ENCODE measurements at regions of chr15 and their contacts with region 1.

Region 1: GRCh38 chr15:89893696-89894455 is at the start of gene AP3S2:
- DNase-seq: peak; percentile 95
- H3K4me3 Mint-ChIP-seq: peak within 1 kb of the TSS; percentile 95
- H3K27ac Mint-ChIP-seq: peak within 1 kb of the TSS; percentile 98
- H3K4me1 Mint-ChIP-seq: peaks cover 56% of the 10 kb centered on the region
- H3K27me3 Mint-ChIP-seq: no peaks in the 10 kb centered on the region
- total RNA-seq, gene AP3S2: 17.2 to 23.5 TPM

Region 2: DNA sequence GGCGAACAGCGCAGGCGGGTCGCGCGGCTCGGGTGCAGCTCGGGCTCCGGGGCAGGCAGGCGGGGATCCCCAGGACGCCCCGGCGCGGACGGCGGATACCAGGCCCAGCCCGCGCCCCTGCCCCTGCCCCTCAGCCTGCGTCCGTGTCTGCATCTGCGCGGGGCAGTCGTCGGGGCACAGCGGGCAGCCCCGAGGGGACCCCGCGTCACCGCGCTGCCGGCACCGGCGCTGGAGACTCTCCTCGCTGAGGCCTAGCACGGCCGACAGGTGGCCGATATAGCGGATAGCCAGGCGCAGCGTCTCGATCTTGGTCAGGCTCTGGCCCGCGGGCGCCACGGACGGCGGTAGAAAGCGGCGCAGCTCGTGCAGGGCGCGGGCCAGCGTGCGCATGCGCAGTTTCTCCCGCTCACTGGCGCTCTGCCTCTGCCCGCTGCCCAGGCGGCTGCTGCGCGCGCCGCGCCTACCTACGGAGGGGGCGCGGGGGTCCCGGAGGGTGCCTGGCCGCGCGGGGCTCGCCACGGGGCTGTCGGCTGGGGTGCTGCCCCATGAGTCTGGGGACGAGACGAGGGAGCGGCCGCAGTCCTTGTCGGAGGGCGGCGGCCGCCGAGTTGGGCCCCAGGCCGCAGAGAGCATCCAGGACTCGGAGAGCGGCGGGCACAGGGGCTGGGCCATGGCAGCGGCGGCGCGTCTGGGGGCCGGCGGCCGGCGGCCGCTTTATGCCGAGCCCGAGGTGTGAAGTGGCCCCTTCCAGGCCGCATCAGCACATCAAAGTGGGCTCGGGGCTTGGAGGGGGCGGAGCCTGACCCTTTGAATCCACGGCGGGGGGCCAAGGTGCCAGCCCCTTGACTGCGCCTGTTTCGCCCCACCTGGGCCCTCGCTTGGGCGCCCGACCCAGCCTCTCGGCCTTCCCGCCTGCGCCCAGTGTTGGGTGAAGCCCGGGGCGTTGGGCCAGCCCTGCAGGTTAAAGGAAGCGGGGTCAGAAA is 143.0 kb before region 1 on chr15 and contains the start of gene MESP1:
- CTCF ChIA-PET with region 1: no interaction called
- POLR2A ChIA-PET with region 1: no interaction called
- intact Hi-C with region 1: loop called (anchors 5 kb)
- DNase-seq: peak; percentile 91
- H3K4me3 Mint-ChIP-seq: peak within 1 kb of the TSS; percentile 66
- H3K27ac Mint-ChIP-seq: no peak within 1 kb of the TSS
- H3K4me1 Mint-ChIP-seq: peaks cover 3% of the 10 kb centered on the region
- H3K27me3 Mint-ChIP-seq: peaks cover 6% of the 10 kb centered on the region
- total RNA-seq, gene MESP1: 4.6 to 6.7 TPM

Region 3: GRCh38 chr15:89910891-89911626 is 17.2 kb after region 1 on chr15:
- CTCF ChIA-PET with region 1: no interaction called
- POLR2A ChIA-PET with region 1: no interaction called
- intact Hi-C with region 1: no loop called
- DNase-seq: no peak
- H3K4me3 Mint-ChIP-seq: no peak overlapping the region
- H3K27ac Mint-ChIP-seq: no peak overlapping the region
- H3K4me1 Mint-ChIP-seq: peaks cover 3% of the 10 kb centered on the region
- H3K27me3 Mint-ChIP-seq: peaks cover 27% of the 10 kb centered on the region

Region 4: DNA sequence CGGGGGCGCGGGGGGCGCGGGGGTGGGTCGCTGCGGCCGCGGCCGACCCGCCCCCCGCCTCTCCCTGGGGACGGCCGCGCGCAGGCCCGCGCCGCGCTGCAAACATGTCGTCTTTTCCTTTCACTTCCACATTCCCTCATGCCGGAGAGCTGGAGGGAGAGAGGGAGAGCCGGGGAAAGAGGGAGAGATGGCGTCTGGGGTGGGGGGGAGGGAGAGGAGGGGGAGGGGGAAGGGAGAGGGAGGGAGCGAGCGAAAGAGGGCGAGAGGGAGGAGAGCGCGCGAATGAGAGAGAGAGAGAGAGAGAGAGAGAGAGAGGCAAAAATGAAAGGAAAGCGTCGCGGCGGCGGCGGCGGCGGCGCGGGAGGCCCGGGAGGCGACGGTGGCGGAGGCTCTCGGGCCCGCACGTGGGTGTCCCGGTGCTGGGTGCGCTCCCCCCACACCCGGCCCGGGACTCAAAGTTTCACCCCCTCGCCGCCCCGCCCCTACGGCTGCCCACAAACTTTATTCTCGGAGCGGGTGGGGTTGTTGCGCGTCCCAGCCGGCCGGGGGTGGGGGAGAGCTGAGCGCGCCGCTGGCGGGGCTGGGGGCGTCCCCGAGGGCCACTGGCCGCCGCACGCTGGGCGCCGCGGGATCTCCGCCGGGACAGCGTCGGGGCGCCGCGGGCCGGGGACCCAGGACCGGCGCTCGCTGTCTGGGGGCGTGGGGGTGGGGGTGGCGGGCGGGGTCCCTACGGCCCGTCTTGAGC is 108.0 kb after region 1 on chr15:
- CTCF ChIA-PET with region 1: interaction called, 3 read pairs
- POLR2A ChIA-PET with region 1: interaction called, 3 read pairs
- intact Hi-C with region 1: loop called (anchors 2 kb)
- DNase-seq: peak; percentile 78
- H3K4me3 Mint-ChIP-seq: peak overlapping the region; percentile 86
- H3K27ac Mint-ChIP-seq: peak overlapping the region; percentile 86
- H3K4me1 Mint-ChIP-seq: peaks cover 52% of the 10 kb centered on the region
- H3K27me3 Mint-ChIP-seq: no peaks in the 10 kb centered on the region

Region 5: DNA sequence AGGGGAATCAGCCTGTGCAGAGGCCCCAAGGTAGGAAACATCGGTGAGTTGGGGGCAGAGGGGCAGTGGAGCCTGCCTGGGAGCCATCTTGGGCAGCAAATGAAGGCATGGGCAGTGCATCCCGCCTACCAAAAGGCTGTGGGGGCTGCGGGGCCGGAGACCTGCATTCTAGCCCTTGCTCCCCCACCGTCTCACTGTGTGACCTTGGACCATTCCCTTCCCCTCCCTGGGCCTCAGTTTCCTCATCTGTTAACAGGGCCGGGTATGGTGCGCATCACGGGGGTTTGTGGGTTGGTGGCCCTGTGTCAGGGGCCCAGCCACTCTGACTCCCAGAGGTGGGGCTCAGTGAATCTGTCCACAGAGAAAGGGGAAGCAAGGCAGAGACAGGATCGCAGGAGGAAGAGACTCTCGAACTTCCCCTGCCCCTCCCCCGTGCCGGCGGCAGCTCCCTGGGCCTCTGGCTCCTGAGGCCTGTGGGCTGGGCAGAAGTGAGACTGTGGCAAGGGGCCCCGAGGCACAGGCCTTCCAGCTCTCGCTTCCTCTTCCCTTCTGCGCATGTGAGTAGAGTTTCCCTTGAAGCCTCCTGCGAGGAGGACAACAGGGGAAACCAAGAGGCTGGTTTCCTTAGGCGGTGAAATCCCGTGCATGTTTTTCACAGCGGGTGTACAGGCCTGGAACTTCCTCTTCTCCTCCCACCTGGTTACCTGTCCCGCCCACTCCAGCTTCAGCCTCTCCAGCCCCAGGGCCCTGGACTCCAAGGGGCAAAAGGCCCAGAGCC is 165.5 kb after region 1 on chr15:
- CTCF ChIA-PET with region 1: interaction called, 4 read pairs
- POLR2A ChIA-PET with region 1: interaction called, 4 read pairs
- intact Hi-C with region 1: loop called (anchors 1 kb)
- DNase-seq: peak; percentile 92
- H3K4me3 Mint-ChIP-seq: peak overlapping the region; percentile 52
- H3K27ac Mint-ChIP-seq: peak overlapping the region; percentile 97
- H3K4me1 Mint-ChIP-seq: peaks cover 58% of the 10 kb centered on the region
- H3K27me3 Mint-ChIP-seq: no peaks in the 10 kb centered on the region

Region 6: DNA sequence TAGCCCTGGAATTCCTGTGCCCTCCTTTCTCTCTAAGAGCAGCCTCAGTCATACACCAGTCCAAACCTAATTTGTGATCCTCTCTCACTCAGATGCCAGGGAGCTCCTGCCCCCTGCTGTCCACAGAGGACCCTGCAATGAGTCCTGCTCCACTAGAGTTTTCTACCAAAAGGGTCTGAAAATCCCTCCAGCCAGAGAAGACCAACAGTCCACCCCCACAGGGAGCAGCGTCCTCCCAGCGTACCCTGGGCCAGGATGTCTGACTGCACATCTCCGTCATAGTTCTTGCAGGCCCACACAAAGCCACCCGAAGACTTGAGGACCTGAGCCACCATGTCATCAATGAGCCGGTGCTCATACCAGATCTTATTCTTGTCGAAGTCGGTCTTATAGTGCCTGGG is 193.0 kb after region 1 on chr15:
- CTCF ChIA-PET with region 1: interaction called, 15 read pairs
- POLR2A ChIA-PET with region 1: interaction called, 4 read pairs
- intact Hi-C with region 1: no loop called
- DNase-seq: peak; percentile 73
- H3K4me3 Mint-ChIP-seq: no peak overlapping the region
- H3K27ac Mint-ChIP-seq: peak overlapping the region; percentile 49
- H3K4me1 Mint-ChIP-seq: peaks cover 4% of the 10 kb centered on the region
- H3K27me3 Mint-ChIP-seq: no peaks in the 10 kb centered on the region

Region 7: GRCh38 chr15:90400406-90401314 is 506.8 kb after region 1 on chr15:
- CTCF ChIA-PET with region 1: no interaction called
- POLR2A ChIA-PET with region 1: no interaction called
- intact Hi-C with region 1: loop called (anchors 10 kb)
- DNase-seq: peak; percentile 72
- H3K4me3 Mint-ChIP-seq: peak overlapping the region; percentile 57
- H3K27ac Mint-ChIP-seq: peak overlapping the region; percentile 91
- H3K4me1 Mint-ChIP-seq: peaks cover 66% of the 10 kb centered on the region
- H3K27me3 Mint-ChIP-seq: no peaks in the 10 kb centered on the region

Measured in activated CD4-positive, alpha-beta memory T cell treated with anti-CD3 and anti-CD28 coated beads for 36 hours (primary cell).